WTC11 (cell line): ENCODE measurements at regions of chr6 and their contacts with region 1.

Region 1: GRCh38 chr6:32933636-32934085 is 7.2 kb downstream of the HLA-DMB start:
- DNase-seq: peak; percentile 82
- ATAC-seq: peak; percentile 84
- H3K4me3 Mint-ChIP-seq: no peak overlapping the region
- H3K27ac Mint-ChIP-seq: no peak overlapping the region
- H3K4me1 Mint-ChIP-seq: no peaks in the 10 kb centered on the region
- H3K27me3 Mint-ChIP-seq: peaks cover 36% of the 10 kb centered on the region
- CTCF ChIP-seq: peak; percentile 49

Region 2: GRCh38 chr6:32860674-32861073 is 73.0 kb before region 1 on chr6:
- CTCF ChIA-PET with region 1: interaction called, 10 read pairs
- POLR2A ChIA-PET with region 1: no interaction called
- DNase-seq: no peak
- ATAC-seq: no peak
- H3K4me3 Mint-ChIP-seq: no peak overlapping the region
- H3K27ac Mint-ChIP-seq: peak overlapping the region; percentile 88
- H3K4me1 Mint-ChIP-seq: peaks cover 10% of the 10 kb centered on the region
- H3K27me3 Mint-ChIP-seq: peaks cover 37% of the 10 kb centered on the region
- CTCF ChIP-seq: no peak

Region 3: GRCh38 chr6:32894080-32895005 is 39.3 kb before region 1 on chr6:
- CTCF ChIA-PET with region 1: interaction called, 33 read pairs
- POLR2A ChIA-PET with region 1: no interaction called
- DNase-seq: peak; percentile 96
- ATAC-seq: peak; percentile 98
- H3K4me3 Mint-ChIP-seq: peak overlapping the region; percentile 98
- H3K27ac Mint-ChIP-seq: peak overlapping the region; percentile 99
- H3K4me1 Mint-ChIP-seq: peaks cover 13% of the 10 kb centered on the region
- H3K27me3 Mint-ChIP-seq: peaks cover 3% of the 10 kb centered on the region; the same call in 1 of the 2 replicates
- CTCF ChIP-seq: no peak

Region 4: GRCh38 chr6:32912951-32913350 is 20.7 kb before region 1 on chr6:
- CTCF ChIA-PET with region 1: interaction called, 34 read pairs
- POLR2A ChIA-PET with region 1: no interaction called
- DNase-seq: no peak
- ATAC-seq: no peak
- H3K4me3 Mint-ChIP-seq: no peak overlapping the region
- H3K27ac Mint-ChIP-seq: no peak overlapping the region
- H3K4me1 Mint-ChIP-seq: no peaks in the 10 kb centered on the region
- H3K27me3 Mint-ChIP-seq: peaks cover 18% of the 10 kb centered on the region
- CTCF ChIP-seq: no peak

Region 5: GRCh38 chr6:32947552-32948465 is 14.1 kb after region 1 on chr6:
- CTCF ChIA-PET with region 1: interaction called, 162 read pairs
- POLR2A ChIA-PET with region 1: interaction called, 4 read pairs
- DNase-seq: peak; percentile 63
- ATAC-seq: peak; percentile 97
- H3K4me3 Mint-ChIP-seq: no peak overlapping the region
- H3K27ac Mint-ChIP-seq: peak overlapping the region; percentile 32; the same call in 1 of the 2 replicates
- H3K4me1 Mint-ChIP-seq: peaks cover 13% of the 10 kb centered on the region; the same call in 1 of the 2 replicates
- H3K27me3 Mint-ChIP-seq: no peaks in the 10 kb centered on the region
- CTCF ChIP-seq: peak; percentile 35; the same call in 1 of the 2 replicates

Region 6: GRCh38 chr6:32971581-32972352 is 38.1 kb after region 1 on chr6:
- CTCF ChIA-PET with region 1: interaction called, 12 read pairs
- POLR2A ChIA-PET with region 1: interaction called, 6 read pairs
- DNase-seq: peak; percentile 99
- ATAC-seq: peak; percentile 56
- H3K4me3 Mint-ChIP-seq: peak overlapping the region; percentile 98
- H3K27ac Mint-ChIP-seq: peak overlapping the region; percentile 100
- H3K4me1 Mint-ChIP-seq: peaks cover 32% of the 10 kb centered on the region
- H3K27me3 Mint-ChIP-seq: peaks cover 4% of the 10 kb centered on the region; the same call in 1 of the 2 replicates
- CTCF ChIP-seq: no peak